H1 (cell line): ENCODE measurements at regions of chr20 and their contacts with region 1.

Region 1: GRCh38 chr20:36919715-36920333 is 31.7 kb downstream of the SAMHD1 start:
- DNase-seq: no peak
- H3K4me3 ChIP-seq: no peak overlapping the region
- H3K27ac ChIP-seq: no peak overlapping the region
- H3K4me1 ChIP-seq: no peaks in the 10 kb centered on the region
- H3K27me3 ChIP-seq: no peaks in the 10 kb centered on the region
- CTCF ChIP-seq: peak in 2 of 3 experiments; percentile 49 to 76; a peak in 2 of 4 replicates
- EP300 ChIP-seq: no peak
- POLR2A ChIP-seq: no peak
- RAD21 ChIP-seq: peak; percentile 74 to 75

Region 2: DNA sequence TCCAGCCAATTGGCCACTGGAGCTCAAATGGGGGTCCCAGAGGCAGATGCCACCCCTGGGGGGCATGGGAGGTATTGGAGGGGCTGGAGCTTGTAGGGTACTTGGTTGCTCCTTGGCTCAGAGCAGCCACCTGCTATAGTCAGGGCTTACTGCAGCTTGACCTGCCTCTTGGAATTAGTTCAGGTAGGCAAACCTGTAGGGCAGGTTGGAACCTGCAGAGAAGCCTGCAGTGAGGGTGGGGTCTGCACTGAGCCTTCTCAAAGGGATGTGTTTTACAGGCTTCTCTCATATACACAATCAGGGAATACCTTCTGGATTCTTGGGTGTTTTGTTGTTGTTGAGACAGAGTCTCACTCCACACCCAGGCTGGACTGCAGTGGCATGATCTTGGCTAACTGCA is 472.7 kb before region 1 on chr20:
- CTCF ChIA-PET with region 1: no interaction called
- POLR2A ChIA-PET with region 1: no interaction called
- DNase-seq: peak in 1 of 2 experiments; percentile 52
- H3K4me3 ChIP-seq: no peak overlapping the region
- H3K27ac ChIP-seq: no peak overlapping the region
- H3K4me1 ChIP-seq: peaks cover 4 to 11% (median 5%) of the 10 kb centered on the region in 4 experiments; a peak in 4 of 7 replicates
- H3K27me3 ChIP-seq: no peaks in the 10 kb centered on the region
- CTCF ChIP-seq: no peak
- EP300 ChIP-seq: no peak
- POLR2A ChIP-seq: no peak
- RAD21 ChIP-seq: no peak

Region 3: DNA sequence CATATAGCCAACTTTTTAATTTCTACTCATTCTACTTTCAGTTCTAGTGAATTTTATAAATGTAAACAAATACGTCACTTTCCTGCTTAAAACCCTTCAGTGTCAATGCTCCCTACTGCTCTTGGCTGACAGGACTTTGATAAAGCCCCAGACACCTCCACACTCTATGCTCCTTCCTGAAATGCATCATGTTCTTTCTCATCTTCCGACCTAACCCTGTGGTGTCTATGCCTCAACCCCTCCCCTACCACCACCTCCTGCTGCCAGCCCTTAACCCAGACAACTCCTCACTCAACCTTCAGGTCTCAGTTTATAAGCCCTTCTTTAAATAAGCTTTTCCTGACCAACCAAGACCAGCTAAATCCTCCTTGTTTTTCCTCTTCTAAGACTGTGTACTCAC is 24.8 kb before region 1 on chr20:
- CTCF ChIA-PET with region 1: interaction called, 15 read pairs
- POLR2A ChIA-PET with region 1: no interaction called
- DNase-seq: no peak
- H3K4me3 ChIP-seq: no peak overlapping the region
- H3K27ac ChIP-seq: no peak overlapping the region
- H3K4me1 ChIP-seq: no peaks in the 10 kb centered on the region
- H3K27me3 ChIP-seq: no peaks in the 10 kb centered on the region
- CTCF ChIP-seq: no peak
- EP300 ChIP-seq: no peak
- POLR2A ChIP-seq: no peak
- RAD21 ChIP-seq: no peak

Region 4: DNA sequence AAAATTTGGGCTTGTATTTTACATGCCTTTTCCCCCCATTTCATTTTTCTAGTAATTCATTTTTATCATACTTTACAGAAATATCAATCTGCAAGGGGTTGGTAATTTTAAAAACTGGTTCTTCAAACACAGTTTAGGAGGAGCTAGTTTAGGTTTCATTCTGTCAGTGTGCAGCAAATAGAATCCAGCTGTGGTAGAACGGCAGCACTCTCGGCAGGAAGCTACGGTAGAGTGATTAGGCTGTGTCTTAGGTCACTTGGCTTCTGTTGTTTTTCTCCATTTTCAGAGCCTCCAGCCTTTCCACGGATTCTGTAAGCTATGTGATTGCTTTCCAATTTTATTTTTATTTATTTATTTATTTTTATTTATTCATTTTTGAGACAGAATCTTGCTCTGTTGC is 11.2 kb before region 1 on chr20:
- CTCF ChIA-PET with region 1: interaction called, 12 read pairs
- POLR2A ChIA-PET with region 1: interaction called, 4 read pairs
- DNase-seq: no peak
- H3K4me3 ChIP-seq: no peak overlapping the region
- H3K27ac ChIP-seq: no peak overlapping the region
- H3K4me1 ChIP-seq: peaks cover 0 to 6% (median 2%) of the 10 kb centered on the region in 4 experiments; a peak in 4 of 7 replicates
- H3K27me3 ChIP-seq: no peaks in the 10 kb centered on the region
- CTCF ChIP-seq: no peak
- EP300 ChIP-seq: no peak
- POLR2A ChIP-seq: no peak
- RAD21 ChIP-seq: no peak

Region 5: DNA sequence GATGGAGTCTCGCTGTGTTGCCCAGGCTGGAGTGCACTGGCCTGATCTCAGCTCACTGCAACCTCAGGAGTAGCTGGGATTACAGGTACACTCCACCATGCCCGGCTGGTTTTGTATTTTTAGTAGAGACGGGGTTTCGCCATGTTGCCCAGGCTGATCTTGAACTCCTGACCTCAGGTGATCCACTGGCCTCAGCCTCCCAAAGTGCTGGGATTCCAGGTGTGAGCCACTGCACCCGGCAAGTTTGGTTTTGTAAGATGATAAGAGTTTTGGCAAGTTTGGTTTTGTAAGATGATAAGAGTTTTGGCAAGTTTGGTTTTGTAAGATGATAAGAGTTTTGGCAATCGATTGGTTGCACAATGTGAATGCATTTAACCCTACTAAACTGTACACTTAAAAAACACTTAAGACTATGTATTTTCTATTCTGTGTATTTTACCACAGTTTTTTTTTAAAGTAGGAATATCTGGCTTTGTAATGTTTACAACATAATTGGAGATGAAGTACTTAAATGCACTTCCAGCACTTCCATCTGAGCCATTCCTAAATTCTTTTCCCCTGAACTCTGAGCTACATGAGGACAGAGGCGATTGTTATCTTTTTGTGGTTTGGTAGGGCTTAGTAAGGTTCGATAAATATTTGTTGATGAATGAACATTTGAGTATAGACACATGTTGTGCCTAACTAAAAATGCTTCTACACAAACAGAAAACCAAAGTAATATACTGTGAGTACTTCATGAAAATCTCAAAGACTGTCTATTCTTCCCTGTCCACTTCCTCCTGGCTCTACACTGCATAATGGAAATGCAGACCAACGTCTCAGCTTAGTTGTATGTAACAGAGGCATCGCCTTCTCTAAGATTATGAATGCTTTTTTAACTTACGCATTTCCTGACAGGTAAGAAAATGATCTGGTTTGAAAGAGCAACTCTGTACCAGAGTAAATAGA is 12.9 kb after region 1 on chr20:
- CTCF ChIA-PET with region 1: interaction called, 15 read pairs
- POLR2A ChIA-PET with region 1: no interaction called
- DNase-seq: no peak
- H3K4me3 ChIP-seq: no peak overlapping the region
- H3K27ac ChIP-seq: no peak overlapping the region
- H3K4me1 ChIP-seq: no peaks in the 10 kb centered on the region
- H3K27me3 ChIP-seq: no peaks in the 10 kb centered on the region
- CTCF ChIP-seq: no peak
- EP300 ChIP-seq: no peak
- POLR2A ChIP-seq: no peak
- RAD21 ChIP-seq: no peak